AG04449 (cell line): ENCODE measurements at regions of chr10 and their contacts with region 1.

Region 1: GRCh38 chr10:91251430-91252056 is 31.1 kb downstream of the PCGF5 start:
- DNase-seq: peak; percentile 2
- H3K4me3 ChIP-seq: no peak overlapping the region
- CTCF ChIP-seq: peak; percentile 74

Region 2: GRCh38 chr10:90879062-90879461 is 372.5 kb before region 1 on chr10:
- CTCF ChIA-PET with region 1: interaction called, 64 read pairs
- POLR2A ChIA-PET with region 1: no interaction called
- DNase-seq: no peak
- H3K4me3 ChIP-seq: no peak overlapping the region
- CTCF ChIP-seq: no peak

Region 3: DNA sequence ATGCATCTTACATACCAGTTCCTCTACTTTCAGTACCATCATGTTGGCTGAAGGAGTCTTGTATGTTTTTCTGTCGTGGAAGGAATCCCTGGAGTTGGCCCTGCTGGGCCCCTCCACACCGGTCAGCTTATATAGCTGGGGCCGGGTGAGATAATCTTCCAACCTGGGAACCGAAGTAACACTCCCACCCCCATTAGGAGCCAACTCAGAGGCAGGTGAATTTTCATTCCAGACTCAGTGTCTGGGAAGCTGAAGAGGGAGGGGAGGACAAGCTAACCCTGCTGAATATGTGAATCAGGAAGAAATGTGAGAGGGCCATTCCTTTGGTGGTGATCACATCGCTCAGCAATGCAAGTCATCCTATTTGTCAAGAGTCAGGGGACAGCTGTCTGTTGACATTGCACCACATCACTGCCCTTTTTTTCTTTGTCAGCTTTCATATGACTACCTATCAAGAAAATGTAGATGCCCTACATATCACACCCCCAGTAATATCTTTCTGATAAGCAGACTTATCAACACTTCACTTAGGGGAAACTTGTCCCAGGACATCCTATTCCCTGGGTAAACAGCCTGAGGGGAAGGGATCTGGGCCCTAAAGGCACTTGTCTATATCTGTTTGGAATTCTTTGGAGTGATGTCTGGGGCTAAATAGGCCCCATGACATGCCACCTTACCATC is 330.4 kb before region 1 on chr10 and contains the start of gene ANKRD1:
- CTCF ChIA-PET with region 1: interaction called, 29 read pairs
- POLR2A ChIA-PET with region 1: no interaction called
- DNase-seq: peak; percentile 82
- H3K4me3 ChIP-seq: no peak within 1 kb of the TSS
- CTCF ChIP-seq: no peak

Region 4: GRCh38 chr10:91043173-91043910 is 208.2 kb before region 1 on chr10:
- CTCF ChIA-PET with region 1: interaction called, 52 read pairs
- POLR2A ChIA-PET with region 1: no interaction called
- DNase-seq: no peak
- H3K4me3 ChIP-seq: no peak overlapping the region
- CTCF ChIP-seq: peak; percentile 30

Region 5: DNA sequence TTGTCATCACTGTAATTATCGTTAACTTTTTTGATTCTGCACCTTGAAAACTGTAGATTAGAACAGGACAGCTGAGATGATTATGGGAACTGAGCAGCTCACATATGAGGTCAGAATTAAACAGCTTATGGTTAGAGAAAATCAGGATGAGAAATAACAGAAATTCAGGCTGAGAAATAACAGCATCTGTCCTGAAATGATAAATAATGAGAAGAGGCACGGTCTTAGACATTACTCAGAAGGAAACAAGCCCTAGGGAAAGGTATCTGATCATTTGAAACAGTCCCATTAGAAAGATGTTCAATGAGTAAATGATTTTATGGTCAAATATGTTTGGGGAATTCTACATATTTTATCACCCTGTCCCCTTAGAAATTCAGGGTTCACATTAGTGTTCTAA is 96.7 kb before region 1 on chr10:
- CTCF ChIA-PET with region 1: no interaction called
- POLR2A ChIA-PET with region 1: no interaction called
- DNase-seq: no peak
- H3K4me3 ChIP-seq: no peak overlapping the region
- CTCF ChIP-seq: no peak

Region 6: GRCh38 chr10:91220194-91220953 is 31.2 kb before region 1 on chr10 and contains the start of gene PCGF5:
- CTCF ChIA-PET with region 1: interaction called, 11 read pairs
- POLR2A ChIA-PET with region 1: no interaction called
- DNase-seq: peak; percentile 3
- H3K4me3 ChIP-seq: peak within 1 kb of the TSS; percentile 81
- CTCF ChIP-seq: peak; percentile 47

Region 7: DNA sequence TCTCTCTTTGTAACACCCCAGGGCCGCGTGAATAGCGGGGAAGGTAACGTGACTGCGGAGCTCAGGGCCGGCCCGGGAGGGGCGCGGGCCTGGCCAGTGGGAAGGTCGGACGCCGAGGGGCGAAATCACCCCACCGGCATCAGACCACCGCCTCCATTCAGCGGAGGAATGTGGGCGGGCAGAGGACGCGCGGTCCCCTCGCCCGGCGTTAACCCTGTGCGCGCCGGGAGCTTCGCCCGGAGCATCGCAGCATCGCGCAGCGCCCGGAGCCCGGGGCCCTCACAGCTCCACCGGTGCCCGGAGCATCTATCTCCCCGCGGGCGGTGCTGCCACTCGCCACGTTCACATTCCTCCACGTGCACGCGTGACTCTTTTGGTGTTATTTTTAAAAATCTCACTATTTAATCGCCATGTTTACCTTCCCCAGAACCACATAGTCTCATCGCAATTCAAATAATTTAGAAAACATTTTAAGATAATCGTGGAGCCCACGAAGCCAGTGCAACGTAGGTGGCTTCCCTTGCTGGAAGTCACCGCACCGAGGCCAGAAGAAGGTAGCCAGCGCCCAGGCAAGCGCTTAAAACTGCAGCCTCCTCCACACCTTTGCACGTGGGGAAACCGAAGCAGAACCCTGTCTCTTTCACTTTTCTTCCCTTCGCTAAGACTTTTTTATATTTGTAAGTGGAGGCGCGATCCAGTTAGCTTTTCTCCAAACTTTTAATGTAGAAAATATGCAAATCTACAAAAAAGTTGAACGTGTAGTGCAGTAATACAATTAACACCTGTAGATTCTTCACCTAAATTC is 635.9 kb after region 1 on chr10:
- CTCF ChIA-PET with region 1: no interaction called
- POLR2A ChIA-PET with region 1: no interaction called
- DNase-seq: no peak
- H3K4me3 ChIP-seq: peak overlapping the region; percentile 64
- CTCF ChIP-seq: no peak